ENCODE measurements at regions of chr6 and their contacts with region 1.

Region 1: DNA sequence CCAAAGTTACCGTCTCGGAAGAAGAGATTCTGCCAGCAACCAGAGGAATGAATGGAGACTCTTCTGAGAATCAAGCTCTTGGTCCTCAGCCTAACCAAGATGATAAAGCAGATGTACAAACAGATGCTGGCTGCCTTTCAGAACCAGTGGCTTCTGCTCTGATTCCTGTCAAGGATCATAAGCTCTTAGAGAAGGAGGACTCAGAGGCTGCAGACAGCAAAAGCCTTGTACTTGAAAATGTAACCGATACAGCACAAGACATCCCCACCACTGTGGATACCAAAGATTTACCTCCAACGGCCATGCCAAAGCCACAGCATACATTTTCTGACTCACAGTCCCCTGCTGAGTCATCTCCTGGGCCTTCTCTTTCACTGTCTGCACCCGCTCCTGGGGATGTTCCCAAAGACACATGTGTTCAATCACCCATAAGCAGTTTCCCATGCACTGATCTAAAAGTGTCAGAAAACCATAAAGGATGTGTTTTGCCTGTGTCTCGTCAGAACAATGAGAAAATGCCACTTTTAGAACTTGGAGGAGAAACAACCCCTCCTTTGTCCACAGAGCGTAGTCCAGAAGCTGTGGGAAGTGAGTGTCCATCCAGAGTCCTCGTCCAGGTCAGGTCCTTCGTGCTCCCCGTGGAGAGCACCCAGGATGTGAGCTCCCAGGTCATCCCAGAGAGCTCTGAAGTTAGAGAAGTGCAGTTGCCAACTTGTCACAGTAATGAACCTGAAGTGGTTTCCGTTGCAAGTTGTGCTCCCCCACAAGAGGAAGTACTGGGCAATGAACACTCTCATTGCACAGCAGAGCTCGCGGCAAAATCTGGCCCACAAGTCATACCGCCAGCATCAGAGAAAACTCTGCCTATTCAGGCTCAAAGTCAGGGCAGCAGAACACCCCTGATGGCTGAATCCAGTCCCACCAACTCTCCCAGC is 109.6 kb downstream of the RTN4IP1 start:
- DNase-seq: peak; percentile 89
- ATAC-seq: peak; percentile 66
- H3K4me3 Mint-ChIP-seq: peak overlapping the region; percentile 88
- H3K27ac Mint-ChIP-seq: peak overlapping the region; percentile 99
- H3K4me1 Mint-ChIP-seq: peaks cover 71% of the 10 kb centered on the region
- H3K27me3 Mint-ChIP-seq: no peaks in the 10 kb centered on the region

Region 2: DNA sequence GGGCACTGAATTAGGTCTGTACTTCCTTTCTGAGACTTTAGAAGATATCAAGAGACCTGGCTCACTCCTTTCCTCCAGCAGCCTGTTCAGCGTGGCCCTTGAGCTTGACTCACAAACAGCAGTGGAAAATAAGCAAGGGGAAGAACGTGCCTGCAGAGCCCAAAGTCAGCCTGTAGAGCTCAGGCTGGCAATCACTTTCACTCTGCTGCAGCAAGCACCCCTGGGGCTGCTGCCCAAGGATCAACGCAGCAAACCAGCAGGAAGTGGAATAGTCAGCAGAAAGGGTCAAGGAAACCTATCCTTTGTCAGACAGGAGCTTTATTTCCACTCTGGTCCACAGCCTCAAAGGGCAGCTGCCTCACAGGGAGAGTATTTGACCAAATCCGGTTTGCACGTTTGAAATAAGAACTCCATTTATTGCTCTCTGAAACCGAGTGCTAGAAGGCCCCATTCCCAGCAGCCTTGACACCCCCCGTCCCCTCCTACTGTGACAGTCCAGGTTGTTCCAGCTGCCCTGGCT is 356.2 kb before region 1 on chr6:
- CTCF ChIA-PET with region 1: no interaction called
- POLR2A ChIA-PET with region 1: no interaction called
- intact Hi-C with region 1: loop called in 1 of 2 experiments (anchors 2 kb)
- DNase-seq: peak; percentile 80
- ATAC-seq: peak; percentile 59
- H3K4me3 Mint-ChIP-seq: peak overlapping the region; percentile 61
- H3K27ac Mint-ChIP-seq: peak overlapping the region; percentile 89
- H3K4me1 Mint-ChIP-seq: peaks cover 49% of the 10 kb centered on the region
- H3K27me3 Mint-ChIP-seq: peaks cover 2% of the 10 kb centered on the region

Region 3: GRCh38 chr6:106372838-106373501 is 146.8 kb before region 1 on chr6:
- CTCF ChIA-PET with region 1: no interaction called
- POLR2A ChIA-PET with region 1: no interaction called
- intact Hi-C with region 1: loop called in 1 of 2 experiments (anchors 1 kb)
- DNase-seq: no peak
- ATAC-seq: peak; percentile 89
- H3K4me3 Mint-ChIP-seq: no peak overlapping the region
- H3K27ac Mint-ChIP-seq: peak overlapping the region; percentile 78
- H3K4me1 Mint-ChIP-seq: peaks cover 12% of the 10 kb centered on the region
- H3K27me3 Mint-ChIP-seq: peaks cover 8% of the 10 kb centered on the region

Region 4: GRCh38 chr6:106501960-106502371 is 17.8 kb before region 1 on chr6:
- CTCF ChIA-PET with region 1: no interaction called
- POLR2A ChIA-PET with region 1: no interaction called
- intact Hi-C with region 1: no loop called
- DNase-seq: no peak
- ATAC-seq: no peak
- H3K4me3 Mint-ChIP-seq: no peak overlapping the region
- H3K27ac Mint-ChIP-seq: no peak overlapping the region
- H3K4me1 Mint-ChIP-seq: no peaks in the 10 kb centered on the region
- H3K27me3 Mint-ChIP-seq: no peaks in the 10 kb centered on the region

Region 5: DNA sequence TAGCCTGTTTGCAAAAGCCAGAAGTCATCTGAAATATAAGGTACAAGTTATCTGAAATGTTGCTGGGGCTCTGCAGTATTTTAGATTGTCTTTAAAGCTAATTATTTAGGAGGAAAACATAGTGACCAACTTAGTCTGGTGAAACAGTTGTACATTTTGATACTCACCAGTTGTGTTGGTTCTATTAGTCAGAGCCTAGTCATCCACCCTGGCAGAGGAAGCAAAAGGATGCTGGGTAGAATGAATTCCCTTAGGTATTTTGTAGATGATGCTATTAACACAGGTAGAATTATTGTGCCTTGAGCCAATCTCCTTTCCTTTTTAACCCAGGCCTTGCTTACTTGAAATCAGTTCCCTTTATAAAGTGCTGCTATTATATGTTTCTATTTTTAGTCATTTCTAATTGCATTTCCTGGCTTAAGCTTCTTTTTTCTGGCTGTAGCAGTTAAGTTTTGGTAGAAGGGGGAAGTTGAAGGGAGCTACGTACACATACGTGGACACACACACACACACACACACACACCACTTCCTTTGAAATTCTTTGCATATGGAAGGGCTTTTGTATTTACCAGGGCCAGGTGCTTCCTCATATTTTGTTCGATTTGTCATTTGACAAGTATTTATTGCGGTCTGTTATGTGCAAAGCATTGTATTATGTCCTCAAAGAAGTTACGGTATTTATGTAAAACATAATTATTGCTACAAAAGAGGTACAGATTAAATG is 27.1 kb after region 1 on chr6:
- CTCF ChIA-PET with region 1: interaction called, 5 read pairs
- POLR2A ChIA-PET with region 1: interaction called, 3 read pairs
- intact Hi-C with region 1: loop called in 1 of 2 experiments (anchors 1 kb)
- DNase-seq: no peak
- ATAC-seq: peak; percentile 94
- H3K4me3 Mint-ChIP-seq: no peak overlapping the region
- H3K27ac Mint-ChIP-seq: peak overlapping the region; percentile 88
- H3K4me1 Mint-ChIP-seq: peaks cover 49% of the 10 kb centered on the region
- H3K27me3 Mint-ChIP-seq: no peaks in the 10 kb centered on the region

Region 6: DNA sequence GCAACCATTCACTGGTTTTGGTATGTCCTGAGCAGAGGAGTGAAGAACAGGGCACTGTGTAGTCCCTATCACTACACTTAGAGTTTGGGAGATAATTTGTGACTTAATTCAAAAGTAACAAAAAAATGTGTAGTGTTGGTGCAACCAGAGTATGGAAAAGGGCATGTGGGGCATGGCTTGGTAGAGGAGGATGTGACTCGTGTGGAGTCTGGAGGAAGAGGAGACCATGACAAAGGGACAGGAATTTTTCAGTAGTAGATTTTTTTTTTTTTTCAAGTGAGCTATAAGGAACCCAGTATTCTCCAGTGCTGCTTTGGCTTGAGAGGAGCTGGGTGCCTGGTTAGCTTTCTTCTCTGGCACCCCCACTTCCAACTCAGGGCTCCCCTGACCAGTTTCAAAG is 513.4 kb after region 1 on chr6:
- CTCF ChIA-PET with region 1: no interaction called
- POLR2A ChIA-PET with region 1: no interaction called
- intact Hi-C with region 1: loop called in 1 of 2 experiments (anchors 2 kb)
- DNase-seq: no peak
- ATAC-seq: peak; percentile 7
- H3K4me3 Mint-ChIP-seq: no peak overlapping the region
- H3K27ac Mint-ChIP-seq: peak overlapping the region; percentile 28
- H3K4me1 Mint-ChIP-seq: peaks cover 39% of the 10 kb centered on the region
- H3K27me3 Mint-ChIP-seq: no peaks in the 10 kb centered on the region